ENCODE measurements at regions of chr6 and their contacts with region 1.

Region 1: GRCh38 chr6:152416652-152417051 is 220.5 kb downstream of the SYNE1 start:
- DNase-seq: no peak
- ATAC-seq: no peak
- H3K4me3 ChIP-seq: no peak overlapping the region
- H3K27ac ChIP-seq: no peak overlapping the region
- H3K4me1 ChIP-seq: no peaks in the 10 kb centered on the region
- H3K27me3 ChIP-seq: no peaks in the 10 kb centered on the region
- CTCF ChIP-seq: no peak
- EP300 ChIP-seq: no peak
- POLR2A ChIP-seq: no peak
- RAD21 ChIP-seq: no peak

Region 2: GRCh38 chr6:152338335-152339125 is 78.1 kb before region 1 on chr6:
- CTCF ChIA-PET with region 1: no interaction called
- POLR2A ChIA-PET with region 1: no interaction called
- in situ Hi-C with region 1: no loop called
- intact Hi-C with region 1: loop called (anchors 2 kb)
- DNase-seq: peak; percentile 23
- ATAC-seq: peak; percentile 93
- H3K4me3 ChIP-seq: no peak overlapping the region
- H3K27ac ChIP-seq: no peak overlapping the region
- H3K4me1 ChIP-seq: no peaks in the 10 kb centered on the region
- H3K27me3 ChIP-seq: no peaks in the 10 kb centered on the region
- CTCF ChIP-seq: peak; percentile 87
- EP300 ChIP-seq: no peak
- POLR2A ChIP-seq: no peak
- RAD21 ChIP-seq: peak; percentile 72

Region 3: GRCh38 chr6:152368761-152369624 is 47.7 kb before region 1 on chr6:
- CTCF ChIA-PET with region 1: no interaction called
- POLR2A ChIA-PET with region 1: no interaction called
- in situ Hi-C with region 1: no loop called
- intact Hi-C with region 1: no loop called
- DNase-seq: no peak
- ATAC-seq: peak; percentile 25; the same call in 2 of the 3 replicates
- H3K4me3 ChIP-seq: no peak overlapping the region
- H3K27ac ChIP-seq: no peak overlapping the region
- H3K4me1 ChIP-seq: no peaks in the 10 kb centered on the region
- H3K27me3 ChIP-seq: no peaks in the 10 kb centered on the region
- CTCF ChIP-seq: no peak
- EP300 ChIP-seq: no peak
- POLR2A ChIP-seq: no peak
- RAD21 ChIP-seq: no peak

Region 4: GRCh38 chr6:152401978-152402377 is 14.7 kb before region 1 on chr6:
- CTCF ChIA-PET with region 1: no interaction called
- POLR2A ChIA-PET with region 1: no interaction called
- in situ Hi-C with region 1: no loop called
- intact Hi-C with region 1: no loop called
- DNase-seq: no peak
- ATAC-seq: no peak
- H3K4me3 ChIP-seq: no peak overlapping the region
- H3K27ac ChIP-seq: no peak overlapping the region
- H3K4me1 ChIP-seq: no peaks in the 10 kb centered on the region
- H3K27me3 ChIP-seq: no peaks in the 10 kb centered on the region
- CTCF ChIP-seq: no peak
- EP300 ChIP-seq: no peak
- POLR2A ChIP-seq: no peak
- RAD21 ChIP-seq: no peak